A549 (cell line): ENCODE measurements at regions of chr19 and their contacts with region 1.

Region 1: GRCh38 chr19:48999481-49000325 is 6.0 kb downstream of the RUVBL2 start:
- DNase-seq: peak; percentile 81 to 85
- ATAC-seq: peak; percentile 84 to 89
- H3K4me3 ChIP-seq: no peak overlapping the region
- H3K27ac ChIP-seq: no peak overlapping the region
- H3K4me1 ChIP-seq: peaks cover 9% of the 10 kb centered on the region; the same call in 2 of the 3 replicates
- CTCF ChIP-seq: peak; percentile 82
- EP300 ChIP-seq: no peak
- POLR2A ChIP-seq: no peak
- RAD21 ChIP-seq: peak; percentile 69

Region 2: GRCh38 chr19:49056010-49056901 is 56.6 kb after region 1 on chr19:
- CTCF ChIA-PET with region 1: interaction called, 26 read pairs
- POLR2A ChIA-PET with region 1: interaction called, 5 read pairs
- DNase-seq: peak; percentile 64 to 92
- ATAC-seq: peak; percentile 88 to 92
- H3K4me3 ChIP-seq: peak overlapping the region; percentile 54
- H3K27ac ChIP-seq: peak overlapping the region; percentile 64 to 87
- H3K4me1 ChIP-seq: peaks cover 11% of the 10 kb centered on the region
- CTCF ChIP-seq: peak; percentile 15; the same call in 1 of the 3 replicates
- EP300 ChIP-seq: no peak
- POLR2A ChIP-seq: peak; percentile 48; the same call in 1 of the 2 replicates
- RAD21 ChIP-seq: no peak

Region 3: GRCh38 chr19:49064768-49065611 is 65.3 kb after region 1 on chr19 and contains the start of gene NTF4:
- CTCF ChIA-PET with region 1: interaction called, 121 read pairs
- POLR2A ChIA-PET with region 1: no interaction called
- DNase-seq: peak in 1 of 2 experiments; percentile 61
- ATAC-seq: peak; percentile 66 to 79
- H3K4me3 ChIP-seq: peak within 1 kb of the TSS; percentile 45
- H3K27ac ChIP-seq: peak within 1 kb of the TSS; percentile 56 to 82
- H3K4me1 ChIP-seq: peaks cover 18% of the 10 kb centered on the region
- CTCF ChIP-seq: peak; percentile 11; the same call in 2 of the 3 replicates
- EP300 ChIP-seq: no peak
- POLR2A ChIP-seq: no peak
- RAD21 ChIP-seq: no peak
- polyA plus RNA-seq, gene NTF4: 0.34 and 0.37 TPM in 2 replicates

Region 4: DNA sequence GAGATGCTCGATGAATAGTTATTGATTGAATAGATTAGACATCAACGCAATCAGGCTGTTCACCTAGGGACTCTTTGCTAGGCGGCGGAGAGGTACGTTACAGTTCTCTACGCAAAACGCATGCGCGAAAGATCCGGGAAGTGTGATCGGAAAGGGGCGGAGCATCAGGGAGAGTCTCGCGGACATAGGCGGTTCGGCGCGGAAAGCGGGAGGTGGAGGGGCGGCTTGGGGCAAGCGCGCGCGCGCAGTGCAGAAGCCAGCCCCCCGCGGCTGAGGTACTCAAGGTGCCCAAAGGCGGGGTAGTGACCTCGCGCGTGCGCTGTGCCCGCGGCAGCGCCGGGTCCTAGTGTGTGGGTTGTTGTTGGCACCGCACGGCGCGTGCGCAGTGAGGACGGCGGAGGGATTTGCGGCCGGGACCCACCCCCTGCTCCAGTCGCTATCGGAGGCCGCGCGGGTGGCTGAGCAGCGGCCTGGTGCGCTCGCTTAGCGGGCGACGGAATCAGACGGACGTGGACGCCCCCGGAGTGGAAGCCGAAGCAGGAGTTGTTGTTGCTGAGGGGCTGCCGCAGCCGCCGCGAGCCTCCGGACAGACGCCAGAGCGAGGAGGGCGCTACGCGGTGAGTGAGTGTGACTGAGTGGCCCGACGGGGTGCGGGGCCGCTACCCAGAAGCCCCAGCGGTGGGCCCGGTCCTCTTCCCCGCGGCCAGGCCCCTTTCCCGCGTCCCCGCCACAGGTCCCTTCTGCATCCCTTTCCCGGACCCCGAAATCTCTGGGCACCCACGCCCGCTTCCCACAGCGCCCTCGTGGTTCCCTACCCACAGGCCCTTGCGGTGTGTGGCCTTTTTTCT is 85.5 kb after region 1 on chr19 and contains the start of gene SNRNP70:
- CTCF ChIA-PET with region 1: interaction called, 17 read pairs
- POLR2A ChIA-PET with region 1: no interaction called
- DNase-seq: peak; percentile 100
- ATAC-seq: peak; percentile 94 to 95
- H3K4me3 ChIP-seq: peak within 1 kb of the TSS; percentile 73
- H3K27ac ChIP-seq: peak within 1 kb of the TSS; percentile 88 to 91
- H3K4me1 ChIP-seq: peaks cover 20% of the 10 kb centered on the region
- CTCF ChIP-seq: no peak
- EP300 ChIP-seq: no peak
- POLR2A ChIP-seq: peak; percentile 94
- RAD21 ChIP-seq: no peak
- polyA plus RNA-seq, gene SNRNP70: 214 and 220 TPM in 2 replicates